A673 (cell line): ENCODE measurements at regions of chr15 and their contacts with region 1.

Region 1: GRCh38 chr15:37891766-37892368 is 42.6 kb upstream of the TMCO5A start:
- DNase-seq: peak; percentile 68
- H3K4me3 ChIP-seq: no peak overlapping the region
- H3K27ac ChIP-seq: no peak overlapping the region
- H3K4me1 ChIP-seq: no peaks in the 10 kb centered on the region
- H3K27me3 ChIP-seq: no peaks in the 10 kb centered on the region
- CTCF ChIP-seq: peak; percentile 89

Region 2: DNA sequence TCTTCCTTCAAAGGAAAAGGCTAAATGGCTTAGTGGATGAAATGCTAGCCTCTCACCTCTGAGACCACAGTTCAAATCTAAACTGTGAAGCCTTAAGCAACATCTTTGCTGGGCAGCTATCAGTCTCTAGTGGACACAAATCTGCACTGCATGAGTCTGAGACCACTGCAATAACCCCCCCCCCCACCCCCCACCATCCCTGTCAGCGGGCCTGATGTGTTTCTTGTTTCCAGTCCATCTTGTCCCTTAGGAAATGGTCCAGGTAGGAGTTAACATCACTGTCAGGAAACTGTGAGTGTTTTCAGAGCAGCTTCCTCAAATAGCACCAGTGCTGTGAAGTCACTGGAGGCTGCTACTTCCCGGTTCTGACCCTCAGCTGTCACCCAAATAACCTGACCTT is 98.0 kb before region 1 on chr15:
- CTCF ChIA-PET with region 1: interaction called, 11 read pairs
- POLR2A ChIA-PET with region 1: no interaction called
- intact Hi-C with region 1: no loop called
- DNase-seq: peak; percentile 12
- H3K4me3 ChIP-seq: no peak overlapping the region
- H3K27ac ChIP-seq: no peak overlapping the region
- H3K4me1 ChIP-seq: peaks cover 13% of the 10 kb centered on the region
- H3K27me3 ChIP-seq: no peaks in the 10 kb centered on the region
- CTCF ChIP-seq: peak; percentile 41